Gastrocnemius medialis (tissue), 4 donors: ENCODE measurements at regions of chr15 and their contacts with region 1.

Region 1: DNA sequence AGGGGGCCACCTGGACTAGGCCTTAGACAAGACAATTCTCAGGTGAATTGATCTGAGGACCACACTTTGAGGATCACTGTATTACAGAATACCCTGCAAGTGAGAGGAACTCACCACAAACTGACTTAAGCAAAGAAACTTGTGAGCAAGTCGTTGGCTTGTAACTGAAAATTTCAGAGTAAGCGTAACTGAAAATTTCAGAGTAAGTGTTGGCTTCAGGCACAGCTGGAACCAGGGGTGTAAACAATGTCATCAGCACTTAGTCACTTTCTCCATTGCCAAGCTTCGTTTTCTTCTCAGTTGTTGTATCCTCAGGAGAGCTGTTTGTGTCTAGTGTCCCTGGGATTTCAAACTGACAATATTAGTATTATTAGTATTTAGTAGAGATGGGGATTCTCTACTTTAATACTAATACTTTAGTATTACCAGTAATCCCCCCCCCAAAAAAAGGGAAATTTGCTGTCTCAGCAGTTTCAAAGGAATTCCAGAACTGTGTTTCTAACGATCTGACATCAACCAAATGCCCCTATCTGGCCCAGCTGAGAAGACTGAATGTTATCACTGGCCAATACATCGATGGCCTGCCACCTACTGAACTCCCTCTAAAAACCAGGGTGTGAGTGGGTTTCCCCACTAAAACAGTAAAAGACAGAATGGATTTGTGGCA is 474.4 kb downstream of the NTRK3 start:
- DNase-seq: no peak
- ATAC-seq: peak in 1 of 2 donors; percentile 54
- H3K4me3 ChIP-seq: no peak overlapping the region
- H3K27ac ChIP-seq: no peak overlapping the region
- H3K4me1 ChIP-seq: no peaks in the 10 kb centered on the region
- H3K27me3 ChIP-seq: no peaks in the 10 kb centered on the region
- CTCF ChIP-seq: no peak
- POLR2A ChIP-seq: no peak

Region 2: GRCh38 chr15:87527410-87528274 is 254.4 kb before region 1 on chr15:
- in situ Hi-C with region 1: no loop called
- intact Hi-C with region 1: no loop called
- DNase-seq: peak in 1 of 2 donors; percentile 25
- ATAC-seq: peak; percentile 76 to 81
- H3K4me3 ChIP-seq: no peak overlapping the region
- H3K27ac ChIP-seq: no peak overlapping the region
- H3K4me1 ChIP-seq: no peaks in the 10 kb centered on the region
- H3K27me3 ChIP-seq: no peaks in the 10 kb centered on the region
- CTCF ChIP-seq: no peak
- POLR2A ChIP-seq: no peak

Region 3: DNA sequence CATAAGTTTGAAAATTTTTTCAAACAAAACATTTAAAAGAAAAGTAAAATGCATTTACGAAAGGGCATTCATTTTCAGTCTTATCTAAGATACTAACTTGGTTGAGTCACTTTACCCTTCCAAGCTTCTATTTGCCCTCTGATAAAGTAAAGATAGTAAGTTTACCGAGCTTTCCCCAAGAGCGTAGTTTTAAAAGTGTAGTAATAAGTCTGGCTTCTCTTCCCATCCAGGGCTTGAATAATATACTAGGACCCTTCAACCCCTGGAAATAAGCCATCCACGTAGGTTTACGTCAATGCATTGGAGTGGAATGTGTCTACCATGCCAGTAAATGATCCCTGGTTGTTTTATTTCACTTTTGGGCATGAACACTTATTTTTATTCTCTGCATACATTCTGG is 133.8 kb before region 1 on chr15:
- in situ Hi-C with region 1: no loop called
- intact Hi-C with region 1: no loop called
- DNase-seq: no peak
- ATAC-seq: no peak
- H3K4me3 ChIP-seq: no peak overlapping the region
- H3K27ac ChIP-seq: no peak overlapping the region
- H3K4me1 ChIP-seq: no peaks in the 10 kb centered on the region
- H3K27me3 ChIP-seq: no peaks in the 10 kb centered on the region
- CTCF ChIP-seq: no peak
- POLR2A ChIP-seq: no peak

Region 4: DNA sequence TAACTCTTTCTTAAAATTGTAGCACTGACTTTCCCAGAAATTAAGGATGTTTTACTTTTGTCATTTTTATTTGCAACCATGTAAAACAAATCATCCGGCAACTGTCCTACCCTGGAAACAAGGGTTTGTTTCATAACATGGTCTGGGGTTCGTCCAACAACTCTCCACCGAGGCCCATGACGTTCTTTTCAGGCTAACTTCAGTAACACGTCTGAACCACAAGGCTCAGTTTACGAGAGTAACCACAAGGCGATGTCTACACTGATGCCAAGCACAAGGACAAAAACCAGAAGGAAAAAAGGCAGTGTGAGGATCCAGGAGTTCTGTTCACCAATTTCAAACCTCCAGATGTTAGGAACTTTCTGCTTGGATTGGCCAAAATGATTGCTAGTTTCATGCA is 71.7 kb before region 1 on chr15:
- in situ Hi-C with region 1: no loop called
- intact Hi-C with region 1: loop called (anchors 10 kb)
- DNase-seq: peak in 1 of 2 donors; percentile 25
- ATAC-seq: peak in 1 of 2 donors; percentile 52
- H3K4me3 ChIP-seq: no peak overlapping the region
- H3K27ac ChIP-seq: no peak overlapping the region
- H3K4me1 ChIP-seq: no peaks in the 10 kb centered on the region
- H3K27me3 ChIP-seq: no peaks in the 10 kb centered on the region
- CTCF ChIP-seq: no peak
- POLR2A ChIP-seq: no peak